Heart right ventricle (tissue), 16 donors: ENCODE measurements at regions of chr11 and their contacts with region 1.

Region 1: DNA sequence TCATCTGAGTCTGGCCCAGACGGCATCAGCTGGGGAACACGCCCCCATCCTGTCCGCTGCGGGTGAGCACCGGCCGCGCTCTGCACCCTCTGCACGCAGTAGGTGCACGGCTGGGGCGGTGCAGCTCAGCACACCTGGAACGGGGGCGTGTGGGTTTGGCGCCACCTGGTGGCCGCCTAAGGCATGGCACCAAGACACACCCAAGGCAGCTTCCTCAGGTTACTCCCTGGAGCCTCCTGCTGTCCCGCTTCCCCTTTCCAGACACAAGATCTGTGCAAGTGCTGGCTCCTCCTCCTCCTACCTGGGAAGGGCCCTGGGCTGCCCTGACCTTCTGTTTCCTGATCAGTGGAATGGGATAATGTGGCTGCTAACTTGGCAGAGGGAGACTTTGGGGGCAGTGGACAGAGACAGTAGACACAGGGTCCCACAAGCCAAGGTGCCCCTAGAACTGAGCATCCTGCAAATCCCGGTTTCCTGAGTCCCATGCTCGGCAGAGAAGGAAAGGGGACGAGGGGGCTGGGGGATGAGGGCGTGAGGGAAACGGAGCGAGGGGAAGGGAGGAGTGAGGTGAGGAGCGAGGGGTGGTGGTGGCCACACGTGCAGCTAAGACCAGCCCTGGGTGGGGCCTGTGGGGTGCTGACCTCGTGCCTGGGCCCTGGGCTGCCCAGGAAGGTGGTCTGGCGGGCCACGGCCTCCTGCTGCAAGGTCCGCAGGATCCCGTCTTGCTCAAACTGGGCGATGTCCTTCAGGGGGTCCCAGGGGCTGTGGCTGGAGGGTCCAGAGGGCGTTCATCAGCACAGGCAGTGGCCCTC is 34.8 kb upstream of the CARS1 start:
- DNase-seq: peak; percentile 62 to 74
- ATAC-seq: peak; percentile 59 to 76 (median 68)
- H3K4me3 ChIP-seq: no peak overlapping the region
- H3K27ac ChIP-seq: peak overlapping the region in 1 of 10 donors; percentile 18
- H3K4me1 ChIP-seq: peaks cover 0 to 40% (median 26%) of the 10 kb centered on the region in 9 donors
- H3K27me3 ChIP-seq: no peaks in the 10 kb centered on the region
- CTCF ChIP-seq: peak; percentile 97 to 100 (median 100)

Region 2: GRCh38 chr11:2532704-2533586 is 559.1 kb before region 1 on chr11:
- intact Hi-C with region 1: loop called in 1 of 10 experiments (anchors 10 kb)
- DNase-seq: peak; percentile 89 to 93
- ATAC-seq: peak; percentile 76 to 95 (median 88)
- H3K4me3 ChIP-seq: peak overlapping the region in 6 of 10 donors; percentile 23 to 48 (median 38)
- H3K27ac ChIP-seq: peak overlapping the region in 9 of 10 donors; percentile 1 to 69 (median 54)
- H3K4me1 ChIP-seq: peaks cover 13 to 28% (median 21%) of the 10 kb centered on the region in 9 donors
- H3K27me3 ChIP-seq: no peaks in the 10 kb centered on the region
- CTCF ChIP-seq: peak; percentile 99 to 100 (median 99)

Region 3: DNA sequence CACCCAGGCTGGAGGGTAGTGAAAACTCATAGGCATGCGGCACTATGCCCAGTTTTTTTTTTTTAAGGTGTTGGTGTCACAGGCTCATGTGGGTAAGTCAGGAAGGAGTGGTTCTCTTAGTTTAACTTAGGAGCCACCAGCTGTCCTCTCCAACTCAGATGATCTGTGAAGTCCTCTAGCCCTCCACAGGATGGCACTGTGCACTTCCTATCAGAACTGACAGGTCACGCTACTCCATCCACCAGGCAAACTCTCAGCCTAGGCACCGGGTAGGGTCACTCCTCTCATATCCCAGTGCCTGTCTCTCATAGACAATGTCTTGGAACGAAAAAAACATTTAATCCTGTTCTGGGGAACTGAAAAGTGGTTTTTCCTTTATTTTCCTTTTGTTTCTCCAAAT is 116.4 kb before region 1 on chr11:
- intact Hi-C with region 1: loop called in 1 of 10 experiments (anchors 10 kb)
- DNase-seq: peak in 1 of 2 donors; percentile 20
- ATAC-seq: peak; percentile 54 to 84 (median 80)
- H3K4me3 ChIP-seq: no peak overlapping the region
- H3K27ac ChIP-seq: no peak overlapping the region
- H3K4me1 ChIP-seq: peaks cover 0 to 36% (median 11%) of the 10 kb centered on the region in 9 donors
- H3K27me3 ChIP-seq: no peaks in the 10 kb centered on the region
- CTCF ChIP-seq: peak; percentile 11 to 66 (median 46)

Region 4: DNA sequence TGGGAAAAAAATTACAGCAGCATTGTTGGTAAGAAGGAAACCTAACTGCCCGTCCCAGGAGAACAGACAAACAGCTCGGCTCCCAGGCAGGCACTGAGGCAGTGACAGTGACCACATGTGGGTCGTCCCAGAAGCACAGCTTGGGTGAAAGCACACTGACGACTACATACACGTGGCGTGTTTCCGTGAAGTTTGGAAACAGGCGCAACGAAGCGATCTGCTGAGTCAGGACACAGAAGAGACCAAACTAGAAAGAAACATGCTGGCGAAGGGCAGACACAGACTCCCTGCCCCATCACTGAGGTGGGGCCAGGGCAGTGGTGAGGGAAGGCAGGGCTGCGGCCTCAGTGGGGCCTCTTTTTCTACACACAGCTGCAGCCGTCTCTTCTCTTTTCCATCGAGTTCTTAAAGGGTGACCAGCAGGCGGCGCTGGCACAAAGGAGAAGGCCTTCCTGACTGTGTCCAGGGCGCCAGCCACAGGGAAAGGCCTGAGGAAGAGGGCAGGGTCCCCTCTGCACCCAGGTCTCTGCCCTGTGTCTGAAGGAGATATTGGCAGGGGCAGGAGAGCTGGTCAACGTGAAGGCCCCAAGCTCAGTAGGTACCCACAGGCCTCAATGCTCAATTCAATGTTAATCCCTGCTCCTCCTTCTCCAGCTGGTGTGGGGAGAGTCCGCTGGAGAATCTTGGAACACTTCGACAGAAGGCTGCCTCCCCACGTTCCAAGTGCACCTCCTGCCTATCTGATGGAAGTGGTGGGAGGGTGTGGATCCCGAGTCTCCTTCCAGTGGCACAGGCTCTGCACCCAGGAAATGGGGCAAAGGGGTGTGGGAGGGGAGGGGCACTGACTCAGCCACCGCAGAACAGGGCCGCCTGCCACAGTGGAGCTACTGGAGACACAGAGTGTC is 54.7 kb before region 1 on chr11:
- intact Hi-C with region 1: loop called (anchors 1 to 2 kb)
- DNase-seq: peak; percentile 80 to 83
- ATAC-seq: peak; percentile 68 to 90 (median 78)
- H3K4me3 ChIP-seq: no peak overlapping the region
- H3K27ac ChIP-seq: peak overlapping the region in 5 of 10 donors; percentile 10 to 56 (median 22)
- H3K4me1 ChIP-seq: peaks cover 5 to 33% (median 16%) of the 10 kb centered on the region in 9 donors
- H3K27me3 ChIP-seq: no peaks in the 10 kb centered on the region
- CTCF ChIP-seq: peak; percentile 72 to 93 (median 84)

Region 5: DNA sequence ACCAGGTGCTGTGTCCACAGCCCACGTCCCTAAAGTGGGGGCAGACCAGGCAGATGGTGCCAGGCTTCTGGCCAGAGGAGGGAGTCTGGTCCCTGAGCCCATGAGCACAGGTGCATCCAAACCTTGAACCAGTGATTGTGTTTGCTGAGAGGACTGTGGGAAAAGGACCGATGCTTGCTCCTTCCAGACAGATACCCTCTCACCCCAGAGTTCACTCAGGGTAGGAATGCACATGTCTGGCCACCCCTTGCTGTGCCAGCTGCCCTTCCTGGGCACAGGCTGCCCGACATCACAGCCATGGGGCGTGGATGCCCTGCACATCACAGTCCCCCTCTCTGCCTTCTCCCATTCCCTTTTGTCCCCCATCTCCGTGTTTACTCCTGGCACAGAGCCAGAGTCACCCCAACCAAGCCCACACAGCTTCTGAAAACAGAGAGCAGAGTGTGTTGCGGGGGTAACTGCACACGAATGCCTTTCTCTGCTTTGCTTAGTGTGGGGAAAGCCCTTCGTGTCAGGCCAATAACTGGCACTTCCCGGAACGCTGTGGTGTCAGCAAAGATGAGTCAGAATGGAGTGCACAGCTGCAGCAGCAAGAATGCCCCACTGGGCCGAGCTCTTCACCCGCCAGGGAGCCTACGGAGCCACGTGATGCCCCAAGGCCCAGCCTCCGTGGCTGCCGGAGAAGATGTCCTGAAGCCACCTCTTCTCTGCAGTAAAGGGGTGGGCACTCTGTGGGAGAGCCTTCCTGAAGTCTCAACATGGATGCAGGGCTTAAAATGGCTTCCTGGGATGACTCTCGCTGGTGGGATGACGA is 42.4 kb before region 1 on chr11:
- intact Hi-C with region 1: loop called in 2 of 10 experiments (anchors 5 kb)
- DNase-seq: peak; percentile 43 to 48
- ATAC-seq: peak; percentile 69 to 84 (median 78)
- H3K4me3 ChIP-seq: no peak overlapping the region
- H3K27ac ChIP-seq: peak overlapping the region in 3 of 10 donors; percentile 22 to 66 (median 57)
- H3K4me1 ChIP-seq: peaks cover 3 to 55% (median 39%) of the 10 kb centered on the region in 9 donors
- H3K27me3 ChIP-seq: no peaks in the 10 kb centered on the region
- CTCF ChIP-seq: peak in 4 of 9 donors; percentile 19 to 41 (median 26)

Region 6: DNA sequence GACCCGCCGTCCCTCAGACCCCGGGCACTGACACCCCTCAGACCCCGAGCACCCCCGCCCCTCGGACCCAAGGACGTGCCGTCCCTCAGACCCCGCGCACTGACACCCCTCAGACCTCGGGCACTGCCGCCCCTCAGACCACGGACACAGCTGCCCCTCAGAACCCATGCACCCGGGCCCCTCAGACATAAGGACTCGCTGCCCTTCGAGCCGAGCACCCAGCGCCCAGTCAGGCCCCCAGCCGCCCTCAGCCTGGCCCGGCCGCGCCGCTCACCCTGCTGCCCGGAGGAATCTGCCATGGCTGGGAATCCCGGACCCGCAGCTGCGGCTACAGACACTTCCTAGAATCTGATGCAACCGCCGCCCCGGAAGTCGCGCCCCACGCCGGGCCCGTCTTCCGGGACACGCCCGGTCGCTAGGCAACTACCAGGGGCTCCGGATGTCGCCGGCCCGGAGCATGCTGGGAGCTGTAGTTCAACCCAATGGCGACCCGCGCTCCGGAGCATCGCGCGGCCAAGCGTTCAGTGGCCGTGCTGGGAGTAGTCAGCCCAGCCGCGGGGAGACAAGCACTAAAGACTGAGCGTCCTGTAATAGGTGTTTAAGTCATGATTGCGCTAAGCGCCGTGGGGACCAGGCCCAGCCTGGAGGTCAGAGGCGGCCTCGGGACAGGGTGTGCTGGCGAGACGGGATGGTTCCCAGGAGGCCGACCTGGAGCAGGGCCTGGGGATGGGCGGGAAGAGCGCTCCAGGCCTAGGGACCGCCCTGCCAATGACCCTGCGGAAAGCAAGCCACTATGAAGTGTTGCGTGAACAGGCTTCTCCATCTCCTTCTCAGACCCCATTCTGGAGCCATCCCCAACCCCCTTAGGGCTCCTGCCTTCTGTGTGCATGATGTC is 34.7 kb before region 1 on chr11 and contains the start of gene CARS1:
- intact Hi-C with region 1: loop called in 4 of 10 experiments (anchors 5 kb)
- DNase-seq: peak; percentile 96
- ATAC-seq: peak; percentile 98 to 99 (median 98)
- H3K4me3 ChIP-seq: peak within 1 kb of the TSS; percentile 65 to 96 (median 76)
- H3K27ac ChIP-seq: peak within 1 kb of the TSS; percentile 72 to 96 (median 86)
- H3K4me1 ChIP-seq: peaks cover 3 to 48% (median 35%) of the 10 kb centered on the region in 9 donors
- H3K27me3 ChIP-seq: no peaks in the 10 kb centered on the region
- CTCF ChIP-seq: no peak
- total RNA-seq, gene CARS1: 12.5 to 24.6 (median 15.9) TPM

Region 7: DNA sequence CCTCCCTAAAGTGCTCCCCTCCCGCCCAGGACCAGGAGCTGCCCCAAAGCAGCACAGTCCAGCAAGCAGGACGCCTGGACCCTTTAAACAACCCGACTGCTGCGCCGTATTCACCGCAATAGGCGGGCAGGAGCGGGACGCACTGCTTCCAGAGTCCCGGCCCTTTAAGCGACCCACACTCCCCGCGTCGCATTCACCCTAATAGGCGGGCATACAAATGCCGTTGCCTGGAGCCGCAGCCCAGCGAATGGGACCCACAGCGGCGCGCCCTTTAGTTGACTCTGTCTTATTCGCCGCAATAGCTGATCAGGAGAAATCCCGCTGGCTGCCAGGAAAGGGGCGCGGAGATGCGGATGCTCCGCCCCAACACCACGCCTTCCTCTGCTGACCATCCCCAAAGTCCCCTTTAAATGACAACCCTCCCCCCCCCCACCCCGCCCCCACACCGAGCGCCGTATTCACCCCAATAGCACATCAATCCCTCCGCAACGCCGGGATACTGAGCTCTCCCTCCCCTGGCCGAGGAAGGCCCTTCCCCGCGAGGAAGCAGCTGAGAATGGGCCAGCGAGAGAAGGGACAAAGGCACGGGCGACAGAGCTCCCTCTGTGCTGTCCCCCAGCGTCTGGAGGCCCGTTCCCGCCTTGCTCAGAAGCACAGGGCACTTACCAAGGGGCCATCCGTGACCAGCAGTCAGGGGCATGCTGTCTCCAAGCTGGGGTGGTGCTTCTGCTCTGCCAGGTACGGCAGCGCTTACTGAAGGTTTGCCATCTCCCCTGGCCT is 68.4 kb after region 1 on chr11:
- intact Hi-C with region 1: loop called in 1 of 10 experiments (anchors 5 kb)
- DNase-seq: peak; percentile 87 to 91
- ATAC-seq: peak; percentile 75 to 88 (median 84)
- H3K4me3 ChIP-seq: peak overlapping the region; percentile 26 to 67 (median 58)
- H3K27ac ChIP-seq: peak overlapping the region in 9 of 10 donors; percentile 54 to 84 (median 74)
- H3K4me1 ChIP-seq: peaks cover 22 to 91% (median 79%) of the 10 kb centered on the region in 9 donors
- H3K27me3 ChIP-seq: no peaks in the 10 kb centered on the region
- CTCF ChIP-seq: no peak